CD4-positive, alpha-beta T cell (primary cell): ENCODE measurements at regions of chr3 and their contacts with region 1.

Region 1: GRCh38 chr3:112111785-112112402 is 21.2 kb downstream of the GCSAM start:
- DNase-seq: peak; percentile 40 to 86 (median 54)
- ATAC-seq: peak; percentile 98
- H3K4me3 ChIP-seq: no peak overlapping the region
- H3K4me3 Mint-ChIP-seq: no peak overlapping the region
- H3K27ac ChIP-seq: no peak overlapping the region
- H3K27ac Mint-ChIP-seq: no peak overlapping the region
- H3K4me1 ChIP-seq: peaks cover 4% of the 10 kb centered on the region
- H3K4me1 Mint-ChIP-seq: peaks cover 14% of the 10 kb centered on the region
- H3K27me3 ChIP-seq: no peaks in the 10 kb centered on the region
- H3K27me3 Mint-ChIP-seq: no peaks in the 10 kb centered on the region
- CTCF ChIP-seq: peak; percentile 91

Region 2: DNA sequence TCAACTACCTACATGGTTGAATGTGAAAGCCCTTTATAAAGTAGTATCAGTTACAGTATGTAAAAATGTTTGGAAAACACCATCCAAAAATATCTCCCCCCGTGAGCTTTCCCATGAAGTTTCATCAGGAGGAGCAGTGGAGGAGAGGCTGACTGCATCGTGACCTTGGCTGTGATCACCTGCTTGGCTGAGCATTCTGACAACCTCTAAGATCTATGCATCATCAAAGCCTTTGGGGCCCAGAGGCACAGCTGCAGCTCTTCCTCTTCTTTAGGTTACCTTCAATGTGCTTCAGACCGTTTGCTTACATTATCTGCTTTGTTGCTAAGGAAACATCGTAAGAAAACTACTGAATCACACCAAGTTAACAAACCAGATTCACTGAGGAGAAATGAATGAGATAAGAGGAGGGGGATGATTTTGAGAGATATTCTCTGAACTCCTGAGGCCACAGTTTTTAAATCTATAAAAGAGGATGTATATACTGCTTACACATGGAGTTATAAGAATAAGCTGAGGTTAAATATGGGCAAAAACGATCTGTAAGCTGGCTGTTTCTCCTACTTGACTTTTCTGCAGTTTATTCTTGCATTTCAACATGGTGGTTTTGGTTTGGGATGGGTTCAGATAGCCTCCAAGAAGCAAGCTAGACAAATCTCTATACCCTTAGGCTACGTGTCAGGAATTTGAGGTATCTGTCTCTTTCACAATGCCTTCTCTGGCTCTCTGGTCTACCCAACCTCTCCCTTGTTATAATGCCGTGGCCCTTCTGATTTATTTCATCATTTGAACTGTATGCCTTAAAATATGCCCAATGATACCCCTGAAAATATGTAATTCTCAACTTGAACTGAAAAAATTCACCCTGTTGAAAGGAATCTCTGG is 17.2 kb after region 1 on chr3:
- CTCF ChIA-PET with region 1: interaction called, 15 read pairs
- POLR2A ChIA-PET with region 1: interaction called, 9 read pairs
- intact Hi-C with region 1: no loop called
- DNase-seq: peak; percentile 33 to 91 (median 50)
- ATAC-seq: peak; percentile 71
- H3K4me3 ChIP-seq: no peak overlapping the region
- H3K4me3 Mint-ChIP-seq: peak overlapping the region; percentile 50
- H3K27ac ChIP-seq: peak overlapping the region; percentile 80 to 92
- H3K27ac Mint-ChIP-seq: peak overlapping the region; percentile 88
- H3K4me1 ChIP-seq: peaks cover 77% of the 10 kb centered on the region
- H3K4me1 Mint-ChIP-seq: peaks cover 91% of the 10 kb centered on the region
- H3K27me3 ChIP-seq: no peaks in the 10 kb centered on the region
- H3K27me3 Mint-ChIP-seq: no peaks in the 10 kb centered on the region
- CTCF ChIP-seq: no peak

Region 3: DNA sequence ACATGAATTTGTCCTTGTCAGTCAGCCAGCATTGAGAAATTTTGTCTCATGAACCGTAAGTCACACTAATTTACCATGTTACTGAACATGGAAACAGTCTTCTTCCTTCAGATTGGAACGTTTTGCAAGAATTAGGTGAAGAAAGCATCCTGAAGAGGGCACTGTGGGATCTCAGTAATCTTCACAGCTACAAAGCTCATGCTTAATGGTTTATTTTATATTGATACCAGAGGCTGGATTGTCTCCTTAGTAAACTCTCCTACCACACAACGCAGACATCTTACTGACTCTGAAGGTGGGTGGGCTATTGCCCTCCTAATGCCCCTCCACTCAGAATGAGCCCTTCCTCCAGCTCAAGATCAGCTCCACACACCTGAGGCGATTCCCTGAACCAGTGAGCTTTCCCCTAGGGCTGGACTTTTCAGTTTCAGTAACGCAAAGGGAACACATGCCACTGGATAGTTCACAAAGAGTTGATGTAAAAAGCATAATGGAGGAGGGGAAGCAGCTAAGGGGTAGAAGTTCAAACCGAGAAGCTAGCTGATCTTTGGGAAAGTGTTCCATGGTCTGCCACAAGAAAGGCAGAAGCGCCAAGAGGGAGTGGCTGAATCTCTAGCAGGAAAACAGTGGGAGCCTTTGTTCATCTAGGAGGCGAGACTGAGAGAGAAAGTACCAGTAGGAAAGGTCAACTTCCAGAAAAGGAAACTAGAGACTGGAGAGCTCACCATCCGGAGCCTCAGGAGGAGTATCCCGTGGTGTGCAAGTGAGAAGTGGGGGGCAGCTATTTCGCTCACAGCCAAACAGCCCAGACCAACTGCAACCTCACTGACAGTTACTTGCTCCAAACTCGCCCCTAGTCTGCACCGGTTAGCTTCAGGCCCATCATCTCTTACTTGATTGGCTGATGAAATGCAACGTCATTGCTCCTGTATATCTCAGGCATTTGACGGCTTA is 181.8 kb after region 1 on chr3 and contains the start of gene SLC9C1:
- CTCF ChIA-PET with region 1: interaction called, 12 read pairs
- POLR2A ChIA-PET with region 1: interaction called, 3 read pairs
- intact Hi-C with region 1: loop called in 1 of 2 experiments (anchors 5 kb)
- DNase-seq: peak in 8 of 14 experiments; percentile 8 to 76 (median 37)
- ATAC-seq: peak; percentile 82
- H3K4me3 ChIP-seq: peak within 1 kb of the TSS; percentile 27
- H3K4me3 Mint-ChIP-seq: peak within 1 kb of the TSS; percentile 87
- H3K27ac ChIP-seq: no peak within 1 kb of the TSS
- H3K27ac Mint-ChIP-seq: peak within 1 kb of the TSS; percentile 59
- H3K4me1 ChIP-seq: peaks cover 4% of the 10 kb centered on the region
- H3K4me1 Mint-ChIP-seq: peaks cover 25% of the 10 kb centered on the region
- H3K27me3 ChIP-seq: no peaks in the 10 kb centered on the region
- H3K27me3 Mint-ChIP-seq: no peaks in the 10 kb centered on the region
- CTCF ChIP-seq: peak; percentile 73
- total RNA-seq, gene SLC9C1: not detected

Region 4: GRCh38 chr3:112327371-112327951 is 215.6 kb after region 1 on chr3:
- CTCF ChIA-PET with region 1: interaction called, 3 read pairs
- POLR2A ChIA-PET with region 1: no interaction called
- intact Hi-C with region 1: loop called in 1 of 2 experiments (anchors 2 kb)
- DNase-seq: peak in 8 of 14 experiments; percentile 17 to 81 (median 43)
- ATAC-seq: peak; percentile 100
- H3K4me3 ChIP-seq: no peak overlapping the region
- H3K4me3 Mint-ChIP-seq: no peak overlapping the region
- H3K27ac ChIP-seq: no peak overlapping the region
- H3K27ac Mint-ChIP-seq: no peak overlapping the region
- H3K4me1 ChIP-seq: peaks cover 2% of the 10 kb centered on the region
- H3K4me1 Mint-ChIP-seq: peaks cover 5% of the 10 kb centered on the region
- H3K27me3 ChIP-seq: no peaks in the 10 kb centered on the region
- H3K27me3 Mint-ChIP-seq: peaks cover 8% of the 10 kb centered on the region
- CTCF ChIP-seq: peak; percentile 77

Region 5: DNA sequence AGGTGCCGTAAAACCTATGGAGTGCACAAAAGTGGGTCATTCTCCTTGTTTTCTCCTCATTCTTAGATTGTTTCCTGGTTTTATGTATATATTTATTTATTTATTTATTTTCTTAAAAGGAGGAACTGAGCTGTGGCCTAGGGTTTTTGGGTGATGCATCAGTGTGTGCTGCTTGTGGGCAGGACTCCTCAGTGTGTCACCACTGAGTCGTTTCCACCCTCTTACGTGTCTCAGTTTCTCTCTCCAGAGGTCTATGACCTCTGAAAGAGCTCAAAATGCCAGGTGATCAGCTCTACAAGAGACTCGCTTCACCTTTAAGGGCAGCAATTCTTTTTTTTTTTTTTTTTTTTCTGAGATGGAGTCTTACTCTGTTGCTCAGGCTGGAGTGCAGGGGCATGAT is 294.0 kb after region 1 on chr3:
- CTCF ChIA-PET with region 1: no interaction called
- POLR2A ChIA-PET with region 1: no interaction called
- intact Hi-C with region 1: no loop called
- DNase-seq: peak in 2 of 14 experiments; percentile 20 to 46
- ATAC-seq: no peak
- H3K4me3 ChIP-seq: no peak overlapping the region
- H3K4me3 Mint-ChIP-seq: no peak overlapping the region
- H3K27ac ChIP-seq: no peak overlapping the region
- H3K27ac Mint-ChIP-seq: no peak overlapping the region
- H3K4me1 ChIP-seq: no peaks in the 10 kb centered on the region
- H3K4me1 Mint-ChIP-seq: no peaks in the 10 kb centered on the region
- H3K27me3 ChIP-seq: no peaks in the 10 kb centered on the region
- H3K27me3 Mint-ChIP-seq: no peaks in the 10 kb centered on the region
- CTCF ChIP-seq: no peak

Region 6: GRCh38 chr3:112519424-112520001 is 407.6 kb after region 1 on chr3:
- CTCF ChIA-PET with region 1: interaction called, 4 read pairs
- POLR2A ChIA-PET with region 1: no interaction called
- intact Hi-C with region 1: loop called (anchors 1 to 2 kb)
- DNase-seq: peak in 5 of 14 experiments; percentile 26 to 81 (median 75)
- ATAC-seq: peak; percentile 97
- H3K4me3 ChIP-seq: no peak overlapping the region
- H3K4me3 Mint-ChIP-seq: no peak overlapping the region
- H3K27ac ChIP-seq: no peak overlapping the region
- H3K27ac Mint-ChIP-seq: no peak overlapping the region
- H3K4me1 ChIP-seq: no peaks in the 10 kb centered on the region
- H3K4me1 Mint-ChIP-seq: peaks cover 20% of the 10 kb centered on the region
- H3K27me3 ChIP-seq: no peaks in the 10 kb centered on the region
- H3K27me3 Mint-ChIP-seq: no peaks in the 10 kb centered on the region
- CTCF ChIP-seq: peak; percentile 74

Region 7: DNA sequence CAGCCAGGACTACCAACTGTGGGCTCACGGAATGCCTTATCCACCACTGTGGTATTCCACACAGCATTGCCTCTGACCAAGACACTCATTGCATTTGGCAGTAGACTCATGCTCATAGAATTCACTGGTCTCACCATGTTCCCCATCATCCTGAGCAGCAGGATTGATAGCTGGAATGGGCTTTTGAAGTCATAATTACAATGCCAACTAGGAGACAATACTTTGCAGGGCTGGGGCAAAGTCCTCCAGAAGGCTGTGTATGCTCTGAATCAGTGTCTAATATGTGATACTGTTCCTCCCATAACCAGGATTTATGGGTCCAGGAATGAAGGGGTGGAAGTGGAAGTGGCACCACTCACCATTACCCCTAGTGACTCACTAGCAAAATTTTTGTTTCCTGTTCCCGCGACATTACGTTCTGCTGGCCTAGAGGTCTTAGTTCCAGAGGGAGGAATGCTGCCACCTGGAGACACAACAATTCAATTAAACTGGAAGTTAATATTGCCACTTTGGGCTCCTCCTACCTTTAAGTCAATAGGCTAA is 587.6 kb after region 1 on chr3:
- CTCF ChIA-PET with region 1: no interaction called
- POLR2A ChIA-PET with region 1: no interaction called
- intact Hi-C with region 1: no loop called
- DNase-seq: no peak
- ATAC-seq: no peak
- H3K4me3 ChIP-seq: no peak overlapping the region
- H3K4me3 Mint-ChIP-seq: no peak overlapping the region
- H3K27ac ChIP-seq: no peak overlapping the region
- H3K27ac Mint-ChIP-seq: no peak overlapping the region
- H3K4me1 ChIP-seq: no peaks in the 10 kb centered on the region
- H3K4me1 Mint-ChIP-seq: no peaks in the 10 kb centered on the region
- H3K27me3 ChIP-seq: peaks cover 0 to 2% of the 10 kb centered on the region in 2 experiments
- H3K27me3 Mint-ChIP-seq: peaks cover 6% of the 10 kb centered on the region
- CTCF ChIP-seq: no peak